Left colon (tissue), 2 donors: ENCODE measurements at regions of chr2 and their contacts with region 1.

Region 1: GRCh38 chr2:168920504-168921157 is 19.5 kb downstream of the G6PC2 start:
- DNase-seq: no peak
- ATAC-seq: peak; percentile 50

Region 2: GRCh38 chr2:168773719-168774521 is 146.7 kb before region 1 on chr2:
- intact Hi-C with region 1: loop called in 1 of 2 experiments (anchors 10 kb)
- DNase-seq: peak; percentile 39 to 50
- ATAC-seq: peak; percentile 83